ENCODE measurements at regions of chr3 and their contacts with region 1.

Region 1: DNA sequence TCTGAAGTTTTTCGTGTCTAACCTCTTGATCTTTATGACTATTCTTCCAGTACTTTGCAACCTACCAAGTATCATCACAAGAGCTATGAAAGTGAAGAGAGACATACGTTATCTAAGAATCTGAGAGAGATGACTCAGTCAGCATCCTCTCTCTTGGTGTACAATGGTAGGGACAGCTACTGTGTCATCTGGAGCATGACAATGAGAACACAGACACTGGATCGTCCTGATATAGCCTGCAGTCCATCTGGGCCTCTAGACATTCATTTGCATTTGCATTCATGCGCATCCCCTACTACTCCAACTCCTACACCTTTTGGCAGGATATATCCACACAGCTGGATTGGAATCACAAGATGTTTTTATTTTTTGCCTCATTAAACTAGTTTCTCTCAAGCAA is 115.2 kb downstream of the PEX5L start:
- DNase-seq: no peak
- H3K4me3 Mint-ChIP-seq: no peak overlapping the region
- H3K27ac Mint-ChIP-seq: no peak overlapping the region
- H3K4me1 Mint-ChIP-seq: no peaks in the 10 kb centered on the region
- H3K27me3 Mint-ChIP-seq: peaks cover 9% of the 10 kb centered on the region

Region 2: DNA sequence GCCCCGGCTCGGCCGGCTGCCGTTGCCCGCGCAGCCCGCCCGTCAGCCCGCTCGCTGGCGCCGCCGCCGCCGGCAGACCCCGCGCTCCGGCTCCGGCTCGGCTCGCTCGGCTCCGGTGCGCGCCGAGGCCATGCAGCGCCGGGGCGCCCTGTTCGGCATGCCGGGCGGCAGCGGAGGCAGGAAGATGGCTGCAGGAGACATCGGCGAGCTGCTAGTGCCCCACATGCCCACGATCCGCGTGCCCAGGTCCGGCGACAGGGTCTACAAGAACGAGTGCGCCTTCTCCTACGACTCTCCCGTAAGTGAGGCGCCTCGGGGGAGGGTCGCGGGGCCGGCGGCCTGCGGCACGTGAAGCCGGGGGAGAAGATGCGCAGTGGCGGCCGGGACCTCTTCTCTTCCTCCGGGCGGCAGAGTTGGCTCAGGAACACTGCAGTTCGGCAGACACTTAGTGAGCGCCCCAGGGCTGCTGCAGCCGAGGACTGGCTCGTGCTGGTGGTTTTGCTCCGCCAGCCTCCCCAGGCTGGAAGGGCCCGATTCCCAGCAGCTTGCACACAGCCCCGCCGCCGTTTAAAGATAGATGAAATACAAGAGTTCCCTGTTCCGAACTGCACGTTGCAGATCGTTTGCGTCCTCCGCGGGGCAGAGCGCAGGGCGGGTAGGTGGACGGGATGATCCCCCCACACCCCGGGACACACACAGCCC is 268.3 kb before region 1 on chr3:
- CTCF ChIA-PET with region 1: no interaction called
- intact Hi-C with region 1: loop called (anchors 1 kb)
- DNase-seq: peak; percentile 72
- H3K4me3 Mint-ChIP-seq: peak overlapping the region; percentile 85
- H3K27ac Mint-ChIP-seq: peak overlapping the region; percentile 67
- H3K4me1 Mint-ChIP-seq: peaks cover 17% of the 10 kb centered on the region
- H3K27me3 Mint-ChIP-seq: peaks cover 8% of the 10 kb centered on the region

Region 3: DNA sequence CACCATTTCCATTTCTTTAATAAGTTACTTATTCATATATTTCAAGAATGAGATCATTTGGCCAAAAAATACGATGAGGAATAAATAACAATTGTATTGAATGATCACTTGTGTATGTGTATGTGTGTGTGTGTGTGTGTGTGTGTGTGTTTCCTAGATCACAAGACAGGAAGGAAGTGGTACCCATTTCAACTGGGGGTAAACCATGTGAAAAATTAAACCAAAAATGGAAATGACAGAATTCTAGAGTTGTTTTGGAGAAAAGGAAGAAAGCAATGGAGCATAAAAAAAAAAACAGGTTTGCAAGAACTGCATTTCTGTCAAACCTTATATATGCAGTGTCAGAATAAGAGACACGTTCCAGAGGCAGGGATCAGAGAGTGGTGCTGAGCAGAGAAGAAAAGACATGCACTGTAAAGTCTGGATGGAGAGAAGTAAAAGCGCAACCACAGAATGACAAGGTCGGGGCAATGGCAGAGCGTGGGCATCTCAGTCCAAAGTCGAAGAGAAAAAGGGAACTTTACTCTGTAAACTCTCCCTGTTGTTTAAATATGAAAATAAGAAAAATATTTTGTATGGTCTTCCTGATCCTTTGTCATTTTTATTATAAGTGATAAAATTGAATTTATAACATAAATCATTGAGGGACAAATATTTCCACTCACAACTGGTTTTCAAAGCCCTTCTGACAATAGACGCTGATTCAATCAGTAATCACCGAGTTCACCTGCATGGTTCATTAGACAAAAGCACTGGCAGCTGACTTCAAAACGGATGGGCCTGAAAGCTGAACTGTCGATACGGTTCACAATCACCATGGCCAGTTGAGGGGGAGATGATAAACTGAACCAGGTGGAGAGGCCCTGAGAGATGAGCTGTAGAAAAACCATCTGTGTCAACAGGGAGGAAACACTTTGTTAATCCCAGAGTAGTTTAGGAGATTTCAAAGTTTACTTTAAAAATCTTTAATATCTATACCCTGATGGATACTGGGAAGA is 39.9 kb after region 1 on chr3:
- CTCF ChIA-PET with region 1: no interaction called
- intact Hi-C with region 1: no loop called
- DNase-seq: no peak
- H3K4me3 Mint-ChIP-seq: no peak overlapping the region
- H3K27ac Mint-ChIP-seq: no peak overlapping the region
- H3K4me1 Mint-ChIP-seq: no peaks in the 10 kb centered on the region
- H3K27me3 Mint-ChIP-seq: peaks cover 24% of the 10 kb centered on the region

Measured in activated naive CD4-positive, alpha-beta T cell treated with anti-CD3 and anti-CD28 coated beads for 36 hours (primary cell).